HEK293T (cell line): ENCODE measurements at regions of chr15 and their contacts with region 1.

Region 1: DNA sequence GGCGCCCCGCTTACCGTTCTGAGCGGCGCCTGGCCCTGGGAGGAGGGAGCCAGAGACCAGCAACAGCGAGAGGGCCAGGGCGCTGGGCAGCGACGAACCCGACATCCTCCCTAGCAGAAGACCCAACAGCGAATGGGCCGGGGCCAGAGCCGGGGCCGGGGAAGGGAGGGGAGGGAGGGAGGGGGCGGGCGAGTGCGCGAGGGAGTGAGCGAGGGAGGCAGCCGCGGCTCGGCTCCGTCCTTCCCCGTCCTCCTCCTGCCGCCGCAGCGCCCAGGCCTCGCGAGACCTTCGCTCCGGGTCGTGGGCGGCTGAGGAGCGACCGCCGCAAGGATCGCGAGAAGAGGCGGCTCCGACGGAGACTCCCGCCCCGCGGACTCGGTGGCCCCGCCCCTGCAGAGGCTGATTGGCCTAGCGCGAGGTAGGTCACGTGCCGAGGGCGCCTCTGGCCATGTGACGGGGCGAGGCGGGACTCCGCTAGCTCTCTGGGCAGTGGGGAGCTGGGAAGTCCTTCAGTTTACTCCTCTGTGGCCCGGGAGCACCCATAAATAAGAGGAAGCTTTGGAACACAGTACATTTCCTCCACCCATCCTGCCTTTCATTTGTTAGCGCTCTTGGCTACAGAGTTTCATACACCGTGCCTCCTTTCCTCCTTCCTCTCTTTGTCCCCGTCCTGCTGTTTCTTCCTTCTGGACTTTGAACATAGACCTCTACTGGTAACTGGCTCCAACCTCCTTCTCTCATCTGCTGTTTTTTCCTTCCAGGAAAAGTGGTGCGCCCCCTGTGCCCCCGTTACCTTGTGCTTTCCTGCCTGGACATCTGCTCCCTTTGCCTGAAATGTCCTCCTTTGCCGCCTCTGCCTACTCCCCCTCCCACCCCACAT is at the start of gene NPTN:
- DNase-seq: peak; percentile 95

Region 2: DNA sequence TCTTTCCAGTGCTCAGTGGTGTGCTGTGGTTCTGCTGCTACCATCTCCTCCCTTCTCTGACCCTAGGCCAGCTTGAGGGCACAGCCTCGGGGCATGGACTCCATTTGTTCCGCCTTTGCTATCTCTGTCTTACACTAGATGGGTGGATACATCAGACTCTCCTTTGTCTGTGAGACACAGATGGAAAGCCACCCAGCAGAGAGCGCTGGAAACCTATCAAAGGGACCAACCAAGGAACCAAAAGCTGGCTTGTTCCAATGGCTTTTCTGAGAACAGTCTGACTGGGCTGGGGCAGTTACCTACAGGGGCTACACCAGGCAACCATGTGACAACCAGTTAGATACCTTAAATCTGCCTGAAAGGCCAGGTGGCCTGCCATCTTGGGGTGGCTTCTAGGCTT is 64.0 kb before region 1 on chr15:
- CTCF ChIA-PET with region 1: interaction called, 11 read pairs
- POLR2A ChIA-PET with region 1: interaction called, 6 read pairs
- DNase-seq: no peak

Region 3: GRCh38 chr15:73607405-73608242 is 25.7 kb before region 1 on chr15:
- CTCF ChIA-PET with region 1: interaction called, 3 read pairs
- POLR2A ChIA-PET with region 1: interaction called, 16 read pairs
- DNase-seq: no peak

Region 4: DNA sequence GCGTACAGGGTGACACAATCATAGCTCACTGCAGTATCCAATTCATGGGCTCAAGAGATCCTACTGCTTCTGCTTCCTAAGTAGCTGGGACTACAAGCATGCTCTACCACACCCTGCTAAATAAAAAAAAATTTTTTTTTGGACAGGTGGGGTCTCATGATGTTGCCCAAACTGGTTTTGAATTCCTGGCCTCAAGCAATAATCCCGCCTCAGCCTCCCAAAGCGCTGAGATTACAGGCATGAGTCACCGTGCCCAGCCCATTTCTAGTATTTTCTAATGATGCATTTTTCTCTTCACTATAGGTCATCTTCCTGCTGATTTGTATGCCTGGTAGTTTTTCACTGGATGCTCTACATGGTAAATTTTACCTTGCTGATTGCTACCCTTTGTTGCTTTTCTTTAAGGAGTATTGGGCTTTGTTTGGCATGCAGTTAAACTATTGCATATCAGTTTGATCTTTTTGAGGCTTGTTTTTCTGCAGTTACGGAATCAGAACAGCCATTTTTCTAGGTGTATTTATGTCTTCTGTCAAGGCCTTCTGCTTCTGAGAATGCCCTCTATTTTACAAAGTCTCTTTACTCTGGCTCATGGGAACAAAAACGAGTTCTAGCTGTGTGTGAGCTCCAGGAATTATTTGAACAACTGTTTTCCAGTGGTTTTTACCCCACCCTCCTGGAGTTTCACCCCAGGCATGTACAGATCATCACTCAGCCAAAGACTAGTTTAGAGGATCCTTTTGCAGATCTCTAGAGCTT is 14.1 kb after region 1 on chr15:
- CTCF ChIA-PET with region 1: interaction called, 17 read pairs
- POLR2A ChIA-PET with region 1: interaction called, 3 read pairs
- DNase-seq: no peak

Region 5: DNA sequence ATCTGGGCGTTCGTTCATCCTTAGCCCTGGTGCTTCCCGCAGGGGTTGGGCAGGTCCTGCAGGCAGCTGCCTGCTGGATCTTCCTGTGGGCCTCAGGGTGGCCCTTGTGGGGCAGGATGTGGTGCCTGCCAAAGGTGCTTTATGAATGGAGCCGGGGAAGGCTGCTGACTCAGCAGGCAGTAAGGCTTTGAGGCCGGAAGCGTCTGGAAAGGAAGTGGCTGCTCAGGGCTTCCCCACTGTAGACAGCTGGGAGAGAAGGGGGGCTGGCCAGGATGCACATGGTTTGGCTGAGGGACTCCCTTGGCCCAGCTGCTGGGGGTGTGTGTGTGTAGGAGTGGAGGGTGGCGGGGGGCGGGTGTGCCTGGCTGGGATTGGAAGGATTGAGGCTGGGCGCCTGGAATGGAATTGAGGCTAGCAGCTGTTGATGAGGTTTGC is 63.7 kb after region 1 on chr15:
- CTCF ChIA-PET with region 1: interaction called, 87 read pairs
- POLR2A ChIA-PET with region 1: interaction called, 14 read pairs
- DNase-seq: no peak